ENCODE measurements at regions of chr11 and their contacts with region 1.

Region 1: GRCh38 chr11:8477680-8478079 is 116.3 kb downstream of the STK33 start:
- DNase-seq: no peak
- H3K4me3 ChIP-seq: no peak overlapping the region
- H3K27ac ChIP-seq: no peak overlapping the region
- H3K4me1 ChIP-seq: no peaks in the 10 kb centered on the region
- H3K27me3 ChIP-seq: peaks cover 0 to 3% of the 10 kb centered on the region in 2 experiments
- CTCF ChIP-seq: no peak
- POLR2A ChIP-seq: no peak

Region 2: GRCh38 chr11:8459711-8460394 is 17.8 kb before region 1 on chr11:
- CTCF ChIA-PET with region 1: no interaction called
- POLR2A ChIA-PET with region 1: no interaction called
- dilution Hi-C with region 1: no loop called
- intact Hi-C with region 1: loop called (anchors 2 kb)
- DNase-seq: no peak
- H3K4me3 ChIP-seq: no peak overlapping the region
- H3K27ac ChIP-seq: no peak overlapping the region
- H3K4me1 ChIP-seq: no peaks in the 10 kb centered on the region
- H3K27me3 ChIP-seq: no peaks in the 10 kb centered on the region
- CTCF ChIP-seq: no peak
- POLR2A ChIP-seq: no peak

Measured in endothelial cell of umbilical vein (primary cell).